ENCODE measurements at regions of chr15 and their contacts with region 1.

Region 1: DNA sequence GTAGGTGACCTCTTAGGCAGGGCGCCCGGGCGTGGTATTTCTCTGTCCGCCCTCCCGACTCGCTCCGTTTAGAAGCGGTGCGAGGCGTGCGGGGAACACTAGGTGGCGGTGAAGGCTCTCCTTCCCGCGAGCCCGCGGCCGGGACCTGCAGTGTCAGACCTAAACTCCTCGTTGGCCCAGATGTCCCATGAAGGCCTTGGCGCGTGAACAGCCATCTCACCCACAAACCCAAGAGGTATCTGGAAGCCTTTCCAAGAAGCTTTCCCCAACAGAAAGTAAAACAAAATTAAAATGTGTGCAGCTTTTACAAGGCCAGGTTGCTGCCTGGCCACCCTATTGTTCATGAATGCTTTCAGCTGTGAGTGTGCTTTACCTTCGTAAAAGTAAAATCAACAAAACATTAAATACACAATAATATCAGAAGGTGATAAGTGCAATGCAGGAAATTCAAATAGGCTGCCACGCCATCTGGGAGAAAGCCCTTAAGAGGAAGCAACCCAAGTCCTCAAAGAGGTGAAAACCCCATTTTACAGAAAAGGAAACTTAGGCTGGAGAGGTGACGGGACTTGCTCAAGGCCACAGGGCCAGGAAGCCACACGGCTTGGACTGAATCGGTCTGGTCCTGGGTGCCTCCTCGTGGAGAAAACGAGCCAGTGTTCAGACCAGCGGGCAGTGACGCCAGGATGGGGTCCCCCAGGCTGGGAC is 120.3 kb downstream of the ETFA start:
- DNase-seq: peak; percentile 94

Region 2: GRCh38 chr15:75842722-75843551 is 348.0 kb before region 1 on chr15 and contains the start of gene UBE2Q2:
- intact Hi-C with region 1: no loop called
- DNase-seq: peak; percentile 93
- total RNA-seq, gene UBE2Q2: 44.8 to 60.6 TPM

Region 3: DNA sequence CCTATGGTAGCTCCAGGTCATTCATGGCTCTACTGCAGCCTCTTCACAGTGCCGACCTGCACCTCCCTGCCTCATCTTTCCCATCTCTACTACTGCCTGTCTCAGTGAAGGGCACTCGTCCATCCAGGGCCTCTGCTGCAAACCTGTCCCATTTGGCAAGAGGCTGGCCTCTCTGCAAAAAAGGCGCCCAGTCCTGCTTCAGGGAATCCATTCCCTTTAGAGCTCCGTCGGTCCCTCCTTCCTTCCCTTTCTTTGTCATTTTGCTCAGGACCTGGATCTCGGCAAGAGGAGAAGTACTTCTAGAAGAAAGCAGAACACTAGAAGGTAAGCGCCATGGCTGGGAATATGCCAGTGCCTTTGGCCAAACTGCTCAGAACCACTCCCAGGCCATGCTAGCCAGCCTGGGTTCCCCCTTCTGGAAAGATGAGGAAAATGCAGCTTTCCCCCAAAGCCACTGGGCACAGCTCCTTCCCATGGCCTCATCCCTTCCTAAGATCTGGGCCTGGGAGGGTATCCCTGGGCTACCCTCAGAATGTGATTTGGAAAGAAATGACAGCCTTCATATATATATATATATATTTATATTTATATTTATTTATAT is 139.2 kb after region 1 on chr15:
- intact Hi-C with region 1: loop called in 1 of 2 experiments (anchors 5 kb)
- DNase-seq: no peak